Dendritic cell treated with granulocyte-macrophage colony-stimulating factor and Interleukin-4, amounts not matched to agents 40 ng/mL and 50 ng/mL, for 4 days (primary cell): ENCODE measurements at regions of chr15 and their contacts with region 1.

Region 1: GRCh38 chr15:81947548-81947947 is 98.3 kb downstream of the MEX3B start:
- H3K4me3 Mint-ChIP-seq: no peak overlapping the region
- H3K27ac Mint-ChIP-seq: no peak overlapping the region
- H3K4me1 Mint-ChIP-seq: peaks cover 8% of the 10 kb centered on the region
- H3K27me3 Mint-ChIP-seq: no peaks in the 10 kb centered on the region

Region 2: DNA sequence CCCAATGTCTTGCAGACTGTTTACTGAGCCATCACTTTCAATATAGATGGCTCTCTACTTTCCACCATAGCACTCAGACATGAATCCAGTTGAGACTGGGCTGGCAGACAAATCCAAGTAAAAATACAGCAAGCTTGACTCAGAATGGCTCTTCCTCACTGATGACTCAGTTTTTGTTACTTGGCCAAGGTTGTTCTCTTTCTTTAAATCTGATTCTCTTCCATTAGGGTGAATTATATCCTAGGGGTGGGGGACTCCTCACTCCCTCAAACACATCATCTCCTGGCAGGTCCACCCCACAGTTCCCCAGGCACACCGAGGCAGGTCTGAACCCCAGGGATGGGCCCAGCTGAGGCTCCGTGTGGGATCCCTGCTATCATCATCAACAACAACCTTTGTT is 59.6 kb before region 1 on chr15:
- intact Hi-C with region 1: no loop called
- H3K4me3 Mint-ChIP-seq: no peak overlapping the region
- H3K27ac Mint-ChIP-seq: no peak overlapping the region
- H3K4me1 Mint-ChIP-seq: no peaks in the 10 kb centered on the region
- H3K27me3 Mint-ChIP-seq: no peaks in the 10 kb centered on the region

Region 3: DNA sequence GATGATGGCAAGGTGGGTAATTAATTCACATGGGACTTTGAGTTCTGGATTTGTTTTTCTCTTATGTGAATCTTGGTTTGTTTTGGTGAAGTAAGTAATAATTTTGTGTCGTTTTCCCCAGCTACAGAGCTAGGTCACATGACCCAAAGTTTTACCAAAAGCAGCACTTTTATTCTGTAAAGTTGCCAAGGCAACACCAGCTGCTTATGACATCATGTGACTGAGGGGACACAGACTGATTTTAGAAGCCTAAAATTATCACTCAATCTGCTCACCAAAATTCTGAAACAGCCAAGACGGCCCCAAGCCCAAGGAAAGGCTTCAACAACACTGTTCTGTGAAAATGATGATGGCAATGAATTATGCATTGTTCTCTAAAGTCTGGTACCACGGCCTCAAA is 34.4 kb after region 1 on chr15:
- intact Hi-C with region 1: no loop called
- H3K4me3 Mint-ChIP-seq: no peak overlapping the region
- H3K27ac Mint-ChIP-seq: no peak overlapping the region
- H3K4me1 Mint-ChIP-seq: no peaks in the 10 kb centered on the region
- H3K27me3 Mint-ChIP-seq: no peaks in the 10 kb centered on the region

Region 4: GRCh38 chr15:82046666-82047452 is 99.3 kb after region 1 on chr15:
- intact Hi-C with region 1: loop called (anchors 5 kb)
- H3K4me3 Mint-ChIP-seq: peak overlapping the region; percentile 93
- H3K27ac Mint-ChIP-seq: peak overlapping the region; percentile 99
- H3K4me1 Mint-ChIP-seq: peaks cover 28% of the 10 kb centered on the region
- H3K27me3 Mint-ChIP-seq: peaks cover 29% of the 10 kb centered on the region

Region 5: DNA sequence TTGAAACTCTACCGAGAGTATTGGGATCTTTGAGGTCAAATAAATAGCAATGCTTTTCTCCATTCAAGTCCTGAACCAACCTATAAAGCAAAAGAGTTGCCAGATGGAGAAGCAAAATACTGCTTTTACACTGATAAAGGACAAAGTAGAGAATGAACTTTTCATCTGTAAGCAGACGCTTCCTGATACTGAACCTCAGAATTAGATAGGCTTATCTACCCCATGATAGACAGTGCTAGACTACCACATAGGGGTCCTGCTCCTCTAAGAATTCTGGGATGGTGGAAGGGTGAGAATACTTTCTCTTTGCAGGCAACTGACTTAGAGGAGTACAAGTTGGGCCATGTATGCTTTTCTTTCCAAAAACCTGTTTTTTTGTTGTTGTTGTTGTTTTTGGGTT is 324.6 kb after region 1 on chr15:
- intact Hi-C with region 1: no loop called
- H3K4me3 Mint-ChIP-seq: no peak overlapping the region
- H3K27ac Mint-ChIP-seq: no peak overlapping the region
- H3K4me1 Mint-ChIP-seq: no peaks in the 10 kb centered on the region
- H3K27me3 Mint-ChIP-seq: no peaks in the 10 kb centered on the region